ENCODE measurements at regions of chr2 and their contacts with region 1.

Region 1: DNA sequence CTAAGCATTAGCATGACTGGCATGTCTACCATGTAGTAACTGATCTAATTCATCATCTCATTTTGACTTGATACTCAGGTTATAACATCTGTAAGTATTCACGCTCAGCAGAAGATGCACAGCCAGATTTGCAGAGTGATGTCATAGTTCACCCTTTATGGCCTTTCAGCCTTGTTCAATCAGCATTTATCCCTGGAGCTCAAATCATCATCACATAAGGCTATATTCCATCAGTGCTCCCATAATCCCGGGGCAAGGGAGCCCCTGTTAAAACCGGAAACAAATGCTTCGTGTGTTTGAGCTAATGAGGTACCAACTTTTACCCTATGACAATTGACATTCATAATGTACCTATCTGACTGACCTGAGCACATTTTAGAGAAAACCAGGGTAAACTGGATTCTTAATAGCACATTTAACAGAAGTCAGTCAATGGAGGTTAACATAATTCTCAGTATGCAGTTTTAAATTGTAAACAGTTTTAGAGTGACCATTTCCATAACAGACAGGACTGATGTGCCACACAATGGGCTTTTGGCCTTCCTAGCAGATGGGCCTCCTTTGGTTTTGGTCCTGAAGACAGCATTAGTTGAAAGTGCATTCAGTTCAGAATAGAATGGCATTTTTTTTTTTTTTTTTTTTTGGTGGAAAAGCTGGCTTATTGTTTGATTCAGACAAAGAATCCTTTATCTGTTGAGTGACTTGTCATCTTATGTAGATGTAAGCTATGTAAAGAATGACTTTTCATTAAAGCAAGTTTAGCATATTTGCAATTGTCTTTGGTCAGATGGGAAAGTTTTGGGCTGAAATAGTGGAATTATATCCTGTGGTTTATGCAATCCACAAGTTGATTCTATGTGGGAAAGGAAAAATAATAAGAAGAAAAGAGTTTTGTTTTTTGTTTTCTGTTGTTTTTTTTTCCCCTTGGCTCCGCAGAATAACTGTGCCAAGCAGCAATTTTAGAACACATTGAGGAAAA is 866.0 kb upstream of the ACVR2A start:
- DNase-seq: no peak
- H3K4me3 ChIP-seq: no peak overlapping the region
- H3K27ac ChIP-seq: no peak overlapping the region
- H3K4me1 ChIP-seq: no peaks in the 10 kb centered on the region
- H3K27me3 ChIP-seq: no peaks in the 10 kb centered on the region
- CTCF ChIP-seq: no peak
- EP300 ChIP-seq: no peak
- POLR2A ChIP-seq: no peak

Region 2: GRCh38 chr2:147910990-147911473 is 932.2 kb after region 1 on chr2:
- intact Hi-C with region 1: loop called in 1 of 4 experiments (anchors 10 kb)
- DNase-seq: peak in 2 of 5 donors; percentile 16 to 21
- H3K4me3 ChIP-seq: no peak overlapping the region
- H3K27ac ChIP-seq: no peak overlapping the region
- H3K4me1 ChIP-seq: no peaks in the 10 kb centered on the region
- H3K27me3 ChIP-seq: no peaks in the 10 kb centered on the region
- CTCF ChIP-seq: peak; percentile 67 to 73 (median 72)
- EP300 ChIP-seq: no peak
- POLR2A ChIP-seq: no peak

Measured in ovary (tissue), 10 donors.